Heart right ventricle (tissue), 16 donors: ENCODE measurements at regions of chr4 and their contacts with region 1.

Region 1: DNA sequence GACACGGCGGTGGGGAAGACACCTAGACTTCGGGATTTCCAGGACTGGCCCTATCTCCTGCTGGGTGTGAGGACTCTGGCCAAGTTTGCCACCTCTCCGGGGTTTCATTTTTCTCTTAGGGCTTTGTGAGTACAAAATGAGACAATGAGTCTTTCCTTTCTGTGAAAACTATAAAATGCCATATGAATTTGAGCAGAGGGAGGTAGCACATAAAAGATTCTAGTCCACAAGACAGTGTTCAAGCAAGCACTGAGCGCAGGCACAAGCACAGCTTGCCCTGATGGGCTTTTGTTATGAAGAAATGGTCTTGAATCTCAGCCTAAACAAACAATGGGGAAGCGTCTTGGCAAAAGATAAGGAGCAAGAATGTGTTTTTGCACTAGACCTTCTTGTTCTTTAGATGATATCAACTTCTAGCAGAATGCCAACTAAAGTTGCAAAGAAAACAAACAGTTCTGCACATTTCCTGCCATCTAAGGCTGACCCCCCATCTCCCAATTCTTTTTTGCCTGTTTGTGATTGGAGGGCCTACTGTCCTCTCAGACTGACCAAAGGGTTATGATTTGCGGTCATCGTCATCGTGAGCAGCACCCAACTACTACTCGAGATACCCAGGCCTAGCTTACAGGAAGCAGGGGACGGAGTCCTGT is 73.0 kb upstream of the ZNF518B start:
- DNase-seq: peak in 1 of 2 donors; percentile 12
- ATAC-seq: peak; percentile 39 to 93 (median 83)
- H3K4me3 ChIP-seq: no peak overlapping the region
- H3K27ac ChIP-seq: peak overlapping the region in 1 of 10 donors; percentile 42
- H3K4me1 ChIP-seq: peaks cover 0 to 22% (median 10%) of the 10 kb centered on the region in 9 donors
- H3K27me3 ChIP-seq: no peaks in the 10 kb centered on the region
- CTCF ChIP-seq: no peak

Region 2: DNA sequence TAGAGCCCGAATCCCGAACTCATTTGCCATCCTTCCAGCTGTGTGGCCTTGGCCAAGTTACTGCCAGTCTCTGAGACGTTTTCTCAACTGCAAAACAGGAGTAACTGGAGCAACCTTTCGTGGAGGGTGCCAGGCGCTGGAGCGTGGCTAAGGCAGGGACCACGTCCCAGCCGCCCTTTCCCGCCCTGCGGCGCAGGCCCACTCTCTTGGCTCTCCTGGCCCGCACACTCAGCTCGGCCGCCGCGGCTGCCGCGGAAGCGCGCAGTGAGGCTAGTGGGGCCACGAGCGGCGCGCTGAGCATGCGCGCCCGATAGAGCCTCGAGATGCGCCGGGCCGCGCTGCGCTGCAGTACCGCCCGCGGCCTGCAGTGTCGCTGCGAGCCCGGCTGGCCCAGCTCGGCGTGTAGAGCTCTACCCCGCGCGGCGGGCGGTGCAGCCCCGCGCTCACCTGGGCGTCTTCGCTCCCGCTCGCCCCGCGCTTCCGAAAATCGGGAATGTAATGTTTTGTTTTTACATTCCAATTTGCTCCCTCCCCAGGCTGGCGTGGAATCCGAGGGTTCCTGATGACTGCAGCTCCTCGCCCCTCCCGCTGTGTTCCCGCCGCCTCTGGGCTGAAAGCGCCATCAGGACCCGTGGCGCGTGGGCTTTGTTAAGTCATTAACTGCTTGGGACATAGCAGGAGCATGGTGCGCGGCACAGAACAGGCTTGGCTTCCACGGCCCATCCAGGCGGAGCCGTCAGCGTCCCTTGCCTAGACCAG is 69.0 kb before region 1 on chr4:
- intact Hi-C with region 1: loop called in 1 of 10 experiments (anchors 10 kb)
- DNase-seq: peak; percentile 15 to 70
- ATAC-seq: peak; percentile 78 to 93 (median 82)
- H3K4me3 ChIP-seq: peak overlapping the region in 8 of 10 donors; percentile 24 to 49 (median 38)
- H3K27ac ChIP-seq: no peak overlapping the region
- H3K4me1 ChIP-seq: peaks cover 0 to 26% (median 14%) of the 10 kb centered on the region in 9 donors
- H3K27me3 ChIP-seq: peaks cover 6 to 84% (median 41%) of the 10 kb centered on the region in 7 donors
- CTCF ChIP-seq: peak; percentile 83 to 98 (median 92)